ENCODE measurements at regions of chr6 and their contacts with region 1.

Region 1: DNA sequence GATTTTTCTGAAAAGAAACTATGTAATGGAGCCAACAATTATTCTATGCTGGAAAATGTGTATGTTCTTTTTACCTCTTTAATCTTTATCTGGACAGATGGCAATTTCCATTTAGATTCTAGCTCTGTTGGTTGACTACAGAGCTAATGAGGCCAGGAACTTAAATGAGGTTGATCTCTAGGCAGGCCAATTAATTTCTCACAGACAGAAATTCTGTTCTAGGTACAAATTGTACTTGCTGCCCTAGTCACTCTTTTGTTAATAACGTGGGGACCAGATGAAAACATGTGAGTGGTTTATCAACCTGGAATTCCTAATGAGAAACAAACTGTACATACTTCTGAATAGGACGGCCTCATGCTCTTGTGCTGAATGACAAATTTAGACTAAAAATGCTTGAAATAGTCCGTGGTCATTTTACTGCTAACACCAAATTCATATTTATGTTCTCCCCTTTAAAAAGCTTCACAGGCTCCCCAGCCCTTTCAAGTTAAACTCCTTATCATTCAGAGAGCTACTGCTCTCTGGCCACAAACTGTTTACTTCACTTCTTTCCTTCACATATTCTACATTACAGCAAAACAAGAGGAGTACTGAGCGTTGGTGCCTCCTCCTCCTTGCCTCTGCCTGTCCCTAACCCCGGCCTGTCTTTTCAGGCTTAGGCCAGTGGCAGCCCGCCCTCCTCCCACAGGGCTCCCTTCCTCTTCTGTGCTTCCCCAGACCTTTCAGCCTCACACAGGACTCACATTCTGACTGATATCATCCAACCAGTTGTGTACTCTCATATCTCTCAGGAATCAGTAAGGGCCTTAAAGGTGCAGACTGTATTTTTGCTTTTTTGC is 41.4 kb downstream of the DTNBP1 start:
- DNase-seq: peak; percentile 52
- H3K4me3 ChIP-seq: no peak overlapping the region
- H3K27ac ChIP-seq: peak overlapping the region; percentile 9 to 74; a peak in 3 of 4 replicates
- H3K4me1 ChIP-seq: peaks cover 20 to 23% of the 10 kb centered on the region in 2 experiments; a peak in 3 of 4 replicates
- H3K27me3 ChIP-seq: no peaks in the 10 kb centered on the region
- CTCF ChIP-seq: no peak
- EP300 ChIP-seq: peak in 1 of 2 experiments; percentile 45; a peak in 2 of 4 replicates
- RAD21 ChIP-seq: peak; percentile 28

Region 2: GRCh38 chr6:14129575-14129974 is 1491.8 kb before region 1 on chr6:
- CTCF ChIA-PET with region 1: interaction called, 31 read pairs
- POLR2A ChIA-PET with region 1: no interaction called
- DNase-seq: peak; percentile 76
- H3K4me3 ChIP-seq: no peak overlapping the region; a peak in 1 of 4 replicates
- H3K27ac ChIP-seq: no peak overlapping the region
- H3K4me1 ChIP-seq: peaks cover 0 to 4% of the 10 kb centered on the region in 2 experiments; a peak in 2 of 4 replicates
- H3K27me3 ChIP-seq: no peaks in the 10 kb centered on the region
- CTCF ChIP-seq: peak; percentile 51
- EP300 ChIP-seq: no peak
- RAD21 ChIP-seq: peak; percentile 85

Region 3: DNA sequence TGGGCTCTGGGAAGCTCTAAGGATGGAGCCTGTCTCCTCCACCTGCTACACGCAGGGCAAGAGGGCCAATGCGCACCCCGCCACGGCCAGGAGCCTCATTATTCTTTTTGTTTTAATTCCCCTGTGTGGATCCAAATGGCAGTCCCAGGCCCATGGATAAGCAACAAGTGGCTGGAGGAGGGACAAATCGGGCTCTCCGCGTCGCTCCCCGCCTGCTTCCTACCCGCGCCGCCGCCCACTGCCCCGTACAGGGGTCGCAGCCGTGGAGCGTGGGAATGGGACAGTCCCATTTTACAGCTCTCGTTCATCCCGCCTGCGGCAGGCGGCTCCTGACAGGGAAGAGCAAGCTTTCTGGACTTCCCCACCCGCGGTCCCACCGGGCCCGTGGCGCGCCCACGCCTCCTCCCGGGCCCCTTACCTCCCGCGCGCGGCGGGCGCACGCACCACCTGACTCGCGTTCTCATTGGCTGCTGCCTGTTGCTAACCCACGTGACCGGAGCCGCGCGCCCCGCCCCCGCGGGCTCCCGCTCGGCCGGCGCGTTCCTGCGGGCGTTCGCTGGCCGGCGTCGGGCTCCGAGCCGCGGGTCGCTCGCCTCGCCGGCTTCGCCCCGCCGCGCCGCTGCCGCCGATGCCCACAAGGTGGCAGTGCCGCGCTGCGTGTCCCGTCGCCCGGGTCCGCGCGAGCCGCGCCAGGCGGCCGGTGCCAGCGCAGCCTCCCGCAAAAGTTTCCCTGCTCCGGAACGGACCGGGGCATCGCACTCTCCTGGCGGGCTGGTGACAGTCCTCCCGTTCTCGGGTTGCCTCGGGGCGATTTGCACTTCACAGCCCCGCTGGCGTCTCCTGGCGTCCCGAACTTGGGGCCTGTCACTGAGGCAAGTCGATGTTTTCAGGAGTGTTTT is 1410.5 kb before region 1 on chr6:
- CTCF ChIA-PET with region 1: interaction called, 21 read pairs
- POLR2A ChIA-PET with region 1: no interaction called
- DNase-seq: peak; percentile 98
- H3K4me3 ChIP-seq: peak overlapping the region; percentile 83 to 92
- H3K27ac ChIP-seq: peak overlapping the region in 1 of 2 experiments; percentile 93; a peak in 2 of 4 replicates
- H3K4me1 ChIP-seq: peaks cover 0 to 16% of the 10 kb centered on the region in 2 experiments; a peak in 2 of 4 replicates
- H3K27me3 ChIP-seq: no peaks in the 10 kb centered on the region
- CTCF ChIP-seq: peak; percentile 55
- EP300 ChIP-seq: peak; percentile 53 to 91; a peak in 3 of 4 replicates
- RAD21 ChIP-seq: peak; percentile 84

Region 4: GRCh38 chr6:15389765-15390723 is 231.4 kb before region 1 on chr6:
- CTCF ChIA-PET with region 1: interaction called, 10 read pairs
- POLR2A ChIA-PET with region 1: no interaction called
- DNase-seq: peak; percentile 75
- H3K4me3 ChIP-seq: no peak overlapping the region; a peak in 1 of 4 replicates
- H3K27ac ChIP-seq: no peak overlapping the region
- H3K4me1 ChIP-seq: peaks cover 12 to 18% of the 10 kb centered on the region in 2 experiments; a peak in 2 of 4 replicates
- H3K27me3 ChIP-seq: no peaks in the 10 kb centered on the region
- CTCF ChIP-seq: peak; percentile 80
- EP300 ChIP-seq: no peak
- RAD21 ChIP-seq: peak; percentile 93

Region 5: DNA sequence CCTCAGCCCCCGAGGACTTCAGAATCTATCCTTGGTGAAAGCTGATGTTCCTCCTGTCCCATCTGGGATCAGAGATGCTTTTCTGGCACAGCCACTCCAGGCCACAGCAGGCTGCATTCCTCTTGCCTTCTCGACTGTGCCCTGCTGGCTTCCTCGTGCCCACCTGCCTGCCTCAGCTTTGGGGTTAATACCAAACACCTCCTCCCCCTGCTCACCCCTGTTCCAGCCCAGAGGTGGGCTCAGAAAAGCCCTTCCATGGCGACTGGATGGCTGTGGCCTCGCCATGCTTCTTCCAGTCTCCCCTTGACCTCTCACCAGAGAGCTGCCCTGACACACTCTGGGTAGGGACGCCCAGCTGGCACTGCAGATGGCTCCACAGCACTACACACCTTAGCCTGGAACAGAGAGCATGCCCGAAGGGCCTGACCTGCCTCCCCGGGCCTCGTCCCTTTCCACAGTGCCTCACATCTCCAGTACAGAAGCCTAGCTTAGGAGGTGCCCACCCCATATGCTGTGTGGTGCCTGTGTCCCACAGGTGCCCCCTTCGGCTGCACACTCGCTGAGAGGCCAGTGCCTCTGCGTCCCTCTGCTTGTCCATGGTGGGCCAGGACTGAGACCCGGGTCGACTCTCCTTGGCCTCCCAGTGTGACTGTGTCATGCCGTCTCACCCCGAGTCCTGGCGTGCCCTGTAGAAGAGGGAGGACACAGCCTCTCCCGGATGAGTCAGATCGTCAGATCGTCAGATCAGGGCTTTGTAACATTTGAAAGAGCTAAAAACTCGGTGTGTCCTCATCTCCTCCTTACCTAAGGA is 107.3 kb before region 1 on chr6:
- CTCF ChIA-PET with region 1: interaction called, 13 read pairs
- POLR2A ChIA-PET with region 1: no interaction called
- DNase-seq: no peak
- H3K4me3 ChIP-seq: no peak overlapping the region
- H3K27ac ChIP-seq: no peak overlapping the region
- H3K4me1 ChIP-seq: no peaks in the 10 kb centered on the region; a peak in 1 of 4 replicates
- H3K27me3 ChIP-seq: no peaks in the 10 kb centered on the region
- CTCF ChIP-seq: no peak
- EP300 ChIP-seq: no peak
- RAD21 ChIP-seq: no peak

Region 6: GRCh38 chr6:15608396-15608795 is 13.0 kb before region 1 on chr6:
- CTCF ChIA-PET with region 1: interaction called, 13 read pairs
- POLR2A ChIA-PET with region 1: no interaction called
- DNase-seq: no peak
- H3K4me3 ChIP-seq: no peak overlapping the region
- H3K27ac ChIP-seq: peak overlapping the region in 1 of 2 experiments; percentile 28; a peak in 3 of 4 replicates
- H3K4me1 ChIP-seq: no peaks in the 10 kb centered on the region; a peak in 2 of 4 replicates
- H3K27me3 ChIP-seq: no peaks in the 10 kb centered on the region
- CTCF ChIP-seq: no peak
- EP300 ChIP-seq: peak in 1 of 2 experiments; percentile 15; a peak in 1 of 4 replicates
- RAD21 ChIP-seq: no peak

Region 7: GRCh38 chr6:15643542-15643941 is 22.1 kb after region 1 on chr6:
- CTCF ChIA-PET with region 1: no interaction called
- POLR2A ChIA-PET with region 1: no interaction called
- DNase-seq: no peak
- H3K4me3 ChIP-seq: no peak overlapping the region
- H3K27ac ChIP-seq: no peak overlapping the region
- H3K4me1 ChIP-seq: no peaks in the 10 kb centered on the region
- H3K27me3 ChIP-seq: no peaks in the 10 kb centered on the region
- CTCF ChIP-seq: no peak
- EP300 ChIP-seq: no peak
- RAD21 ChIP-seq: no peak

Region 8: DNA sequence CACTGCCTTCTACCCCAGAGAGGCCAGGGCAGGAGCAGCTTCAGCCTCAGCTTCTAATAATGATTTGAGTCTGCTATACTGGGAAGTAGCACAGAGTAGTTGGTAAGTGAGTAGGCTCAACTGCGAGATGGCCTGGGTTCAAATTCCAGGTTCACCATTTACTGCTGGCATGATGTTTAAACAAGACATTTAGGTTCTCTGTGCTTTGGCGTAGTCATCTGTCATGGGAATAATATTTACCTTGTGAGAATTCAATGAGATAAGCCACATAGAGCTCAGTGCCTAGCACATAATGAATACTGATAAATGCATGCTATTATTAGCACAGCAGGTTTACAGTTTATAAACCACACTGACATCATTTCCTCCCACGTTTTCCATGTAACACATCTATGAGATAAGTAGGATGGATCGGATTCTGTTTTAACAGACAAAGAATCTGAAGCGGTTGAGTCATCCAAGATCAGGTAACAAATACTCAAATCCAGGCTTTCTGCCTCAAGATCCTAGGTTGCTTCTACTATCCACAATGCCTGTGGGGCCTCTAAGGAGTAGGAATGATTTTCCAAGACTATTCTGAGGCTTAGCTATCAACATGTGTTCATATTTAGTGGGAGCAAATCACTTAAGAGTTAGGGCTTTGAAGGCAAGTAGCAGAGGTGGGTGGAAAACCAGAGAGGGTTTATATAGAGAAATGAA is 114.3 kb after region 1 on chr6:
- CTCF ChIA-PET with region 1: no interaction called
- POLR2A ChIA-PET with region 1: no interaction called
- DNase-seq: no peak
- H3K4me3 ChIP-seq: no peak overlapping the region
- H3K27ac ChIP-seq: no peak overlapping the region
- H3K4me1 ChIP-seq: peaks cover 0 to 7% of the 10 kb centered on the region in 2 experiments; a peak in 1 of 4 replicates
- H3K27me3 ChIP-seq: no peaks in the 10 kb centered on the region
- CTCF ChIP-seq: no peak
- EP300 ChIP-seq: no peak
- RAD21 ChIP-seq: no peak